ENCODE measurements at regions of chr6 and their contacts with region 1.

Region 1: DNA sequence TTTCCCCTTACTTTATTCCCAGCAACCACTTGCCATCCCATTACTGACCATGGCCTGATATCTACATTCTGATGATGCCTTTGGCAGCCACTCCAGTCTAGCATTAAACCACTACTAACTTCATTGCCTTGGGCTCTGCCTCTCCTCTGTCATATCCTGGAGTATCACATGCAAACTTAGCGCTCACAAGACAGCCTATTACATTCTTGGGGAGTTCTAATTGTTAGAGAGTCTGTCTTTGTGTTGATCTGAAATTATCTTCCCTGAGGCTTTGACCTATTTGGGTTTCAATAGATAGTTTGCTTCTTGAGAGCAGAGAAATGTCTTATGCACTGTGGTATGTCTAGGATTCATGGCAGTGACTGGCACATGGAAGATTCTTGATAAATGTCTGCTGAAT is 40.5 kb upstream of the RAB32 start:
- DNase-seq: no peak
- ATAC-seq: no peak
- H3K4me3 ChIP-seq: no peak overlapping the region
- H3K27ac ChIP-seq: no peak overlapping the region
- H3K4me1 ChIP-seq: no peaks in the 10 kb centered on the region
- H3K27me3 ChIP-seq: no peaks in the 10 kb centered on the region
- CTCF ChIP-seq: no peak
- POLR2A ChIP-seq: no peak

Region 2: DNA sequence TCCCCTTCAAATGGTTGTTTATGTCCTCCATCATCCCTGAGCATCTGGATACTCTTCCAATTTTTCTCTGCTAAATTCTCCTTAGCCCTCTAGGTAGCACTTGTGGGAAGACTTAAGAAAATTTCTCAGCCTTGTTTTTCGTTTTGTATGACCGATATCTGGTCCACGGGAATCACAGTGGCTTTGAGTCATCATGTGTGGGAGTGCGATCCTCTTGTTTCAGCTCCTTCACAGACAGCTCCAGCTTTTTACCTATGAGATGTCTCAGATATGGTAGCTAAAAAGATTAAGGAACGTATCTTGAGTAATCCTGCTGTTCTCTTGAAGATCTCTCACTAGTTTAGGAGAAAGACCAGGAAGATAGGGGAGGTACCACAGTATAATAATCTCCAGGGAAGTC is 278.1 kb before region 1 on chr6:
- intact Hi-C with region 1: no loop called
- DNase-seq: no peak
- ATAC-seq: no peak
- H3K4me3 ChIP-seq: no peak overlapping the region
- H3K27ac ChIP-seq: no peak overlapping the region
- H3K4me1 ChIP-seq: no peaks in the 10 kb centered on the region
- H3K27me3 ChIP-seq: peaks cover 0 to 4% (median 0%) of the 10 kb centered on the region in 9 donors
- CTCF ChIP-seq: no peak
- POLR2A ChIP-seq: no peak

Region 3: GRCh38 chr6:146481527-146481926 is 21.6 kb before region 1 on chr6:
- intact Hi-C with region 1: loop called in 1 of 10 experiments (anchors 1 kb)
- DNase-seq: no peak
- ATAC-seq: no peak
- H3K4me3 ChIP-seq: no peak overlapping the region
- H3K27ac ChIP-seq: no peak overlapping the region
- H3K4me1 ChIP-seq: no peaks in the 10 kb centered on the region
- H3K27me3 ChIP-seq: no peaks in the 10 kb centered on the region
- CTCF ChIP-seq: no peak
- POLR2A ChIP-seq: no peak